PC-3 (cell line): ENCODE measurements at regions of chr16 and their contacts with region 1.

Region 1: GRCh38 chr16:67561824-67562525 is 351 bp upstream of the CTCF start:
- DNase-seq: peak; percentile 93
- ATAC-seq: peak; percentile 89
- H3K4me3 ChIP-seq: peak overlapping the region; percentile 79
- H3K27ac ChIP-seq: peak overlapping the region; percentile 78
- H3K4me1 ChIP-seq: peaks cover 17% of the 10 kb centered on the region
- H3K27me3 ChIP-seq: no peaks in the 10 kb centered on the region
- CTCF ChIP-seq: no peak

Region 2: DNA sequence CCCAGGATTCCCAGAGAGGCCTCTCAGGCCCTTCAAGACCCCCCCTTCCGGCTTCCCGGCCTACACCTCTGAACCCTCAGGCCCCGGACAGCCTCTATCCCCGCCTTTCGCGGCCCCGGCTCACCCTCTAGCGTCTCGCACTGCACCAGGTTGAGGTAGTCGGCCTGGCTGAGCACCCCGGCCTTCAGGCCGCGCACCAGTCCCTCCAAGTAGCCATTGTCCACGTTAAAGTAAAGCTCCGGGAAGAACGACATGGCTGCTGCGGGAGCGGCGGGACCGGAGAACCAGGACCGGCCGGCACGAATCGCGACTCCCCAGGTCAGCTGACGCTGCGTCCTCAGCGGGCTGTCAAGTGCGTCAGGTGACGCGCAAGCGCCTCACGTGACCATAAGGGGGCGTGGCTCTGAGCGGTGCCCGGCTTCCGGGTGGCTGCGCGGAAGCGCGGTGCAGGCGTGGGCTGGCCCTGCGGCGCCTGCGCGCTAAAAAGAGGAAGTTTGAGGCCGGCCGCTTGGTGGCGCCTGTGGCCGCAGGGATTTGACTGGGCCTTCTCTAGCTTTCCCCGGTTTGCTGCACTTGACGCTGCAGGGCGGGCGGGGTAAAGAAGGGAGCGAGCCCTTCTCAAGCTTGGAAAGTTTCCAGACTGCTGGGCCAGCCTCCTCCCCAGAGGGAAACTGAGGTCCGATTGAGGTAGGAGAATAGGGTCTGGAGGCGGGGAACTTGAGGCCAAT is 81.0 kb before region 1 on chr16 and contains the start of gene ATP6V0D1:
- CTCF ChIA-PET with region 1: no interaction called
- POLR2A ChIA-PET with region 1: interaction called, 10 read pairs
- intact Hi-C with region 1: no loop called
- DNase-seq: peak; percentile 97
- ATAC-seq: peak; percentile 93
- H3K4me3 ChIP-seq: peak within 1 kb of the TSS; percentile 90
- H3K27ac ChIP-seq: peak within 1 kb of the TSS; percentile 37
- H3K4me1 ChIP-seq: peaks cover 7% of the 10 kb centered on the region; the same call in 1 of the 2 replicates
- H3K27me3 ChIP-seq: no peaks in the 10 kb centered on the region
- CTCF ChIP-seq: peak; percentile 71
- total RNA-seq, gene ATP6V0D1: 65.5 and 76.6 TPM in 2 replicates

Region 3: GRCh38 chr16:67521095-67521804 is 40.7 kb before region 1 on chr16:
- CTCF ChIA-PET with region 1: interaction called, 17 read pairs
- POLR2A ChIA-PET with region 1: interaction called, 7 read pairs
- intact Hi-C with region 1: loop called (anchors 2 kb)
- DNase-seq: peak; percentile 97
- ATAC-seq: peak; percentile 94
- H3K4me3 ChIP-seq: peak overlapping the region; percentile 73
- H3K27ac ChIP-seq: peak overlapping the region; percentile 75
- H3K4me1 ChIP-seq: peaks cover 7% of the 10 kb centered on the region
- H3K27me3 ChIP-seq: no peaks in the 10 kb centered on the region
- CTCF ChIP-seq: peak; percentile 74

Region 4: GRCh38 chr16:67546761-67547422 is 15.1 kb before region 1 on chr16:
- CTCF ChIA-PET with region 1: interaction called, 19 read pairs
- POLR2A ChIA-PET with region 1: no interaction called
- intact Hi-C with region 1: no loop called
- DNase-seq: peak; percentile 72
- ATAC-seq: peak; percentile 74
- H3K4me3 ChIP-seq: no peak overlapping the region
- H3K27ac ChIP-seq: no peak overlapping the region
- H3K4me1 ChIP-seq: peaks cover under 1% of the 10 kb centered on the region; the same call in 1 of the 2 replicates
- H3K27me3 ChIP-seq: no peaks in the 10 kb centered on the region
- CTCF ChIP-seq: peak; percentile 81

Region 5: GRCh38 chr16:67660564-67661028 is 98.6 kb after region 1 on chr16 and contains the start of gene PARD6A:
- CTCF ChIA-PET with region 1: interaction called, 4 read pairs
- POLR2A ChIA-PET with region 1: interaction called, 3 read pairs
- intact Hi-C with region 1: loop called (anchors 2 kb)
- DNase-seq: peak; percentile 95
- ATAC-seq: peak; percentile 81
- H3K4me3 ChIP-seq: peak within 1 kb of the TSS; percentile 91
- H3K27ac ChIP-seq: peak within 1 kb of the TSS; percentile 70
- H3K4me1 ChIP-seq: peaks cover 6% of the 10 kb centered on the region; the same call in 1 of the 2 replicates
- H3K27me3 ChIP-seq: no peaks in the 10 kb centered on the region
- CTCF ChIP-seq: no peak
- total RNA-seq, gene PARD6A: 15.1 and 16.4 TPM in 2 replicates

Region 6: GRCh38 chr16:67841764-67842508 is 280.0 kb after region 1 on chr16 and contains the start of gene THAP11:
- CTCF ChIA-PET with region 1: no interaction called
- POLR2A ChIA-PET with region 1: interaction called, 16 read pairs
- intact Hi-C with region 1: no loop called
- DNase-seq: peak; percentile 94
- ATAC-seq: peak; percentile 54
- H3K4me3 ChIP-seq: peak within 1 kb of the TSS; percentile 89
- H3K27ac ChIP-seq: peak within 1 kb of the TSS; percentile 83
- H3K4me1 ChIP-seq: peaks cover 31% of the 10 kb centered on the region
- H3K27me3 ChIP-seq: no peaks in the 10 kb centered on the region
- CTCF ChIP-seq: peak; percentile 63
- total RNA-seq, gene THAP11: 39.1 and 39.8 TPM in 2 replicates